ENCODE measurements at regions of chr3 and their contacts with region 1.

Region 1: GRCh38 chr3:124688581-124689454 is 41.4 kb upstream of the UMPS start:
- DNase-seq: peak; percentile 83
- H3K4me3 ChIP-seq: no peak overlapping the region
- H3K27ac ChIP-seq: no peak overlapping the region
- H3K4me1 ChIP-seq: peaks cover 0 to 2% (median 0%) of the 10 kb centered on the region in 4 donors
- H3K27me3 ChIP-seq: no peaks in the 10 kb centered on the region
- CTCF ChIP-seq: peak; percentile 80 to 85 (median 83)
- EP300 ChIP-seq: no peak
- POLR2A ChIP-seq: no peak

Region 2: DNA sequence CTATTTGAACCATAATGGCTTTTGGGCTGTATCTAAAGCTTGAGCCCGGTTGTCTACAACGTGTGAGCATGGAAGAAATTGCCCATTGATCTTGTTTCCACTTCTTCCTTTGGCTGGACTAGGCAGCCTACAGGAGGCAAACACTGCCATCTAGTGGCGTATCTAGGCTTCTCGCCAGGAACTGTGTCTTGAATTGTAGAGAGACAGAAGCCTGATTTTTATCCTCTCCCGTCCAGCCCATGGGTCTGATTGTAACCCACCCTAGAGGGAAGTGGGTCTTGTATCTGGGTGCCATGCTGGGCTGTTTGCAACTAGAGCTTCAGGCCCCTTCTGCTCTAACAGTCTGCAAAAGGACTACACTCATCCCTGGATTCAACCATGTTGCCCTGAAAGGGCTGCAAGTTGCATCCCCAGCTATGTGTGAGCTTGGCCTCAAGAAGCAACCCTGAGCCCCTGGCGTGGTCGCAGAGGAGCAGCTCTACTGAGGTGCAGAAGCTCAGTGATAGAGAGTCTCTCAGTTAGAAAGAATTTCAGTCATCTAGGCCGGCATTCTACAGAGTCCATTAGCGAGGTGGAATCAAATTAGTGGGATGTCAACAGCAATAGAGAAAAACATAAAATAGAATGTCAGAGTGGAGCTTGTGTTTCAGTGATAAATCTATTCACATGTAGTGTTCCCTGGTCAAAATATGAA is 128.8 kb before region 1 on chr3:
- in situ Hi-C with region 1: loop called in 1 of 4 experiments (anchors 5 kb)
- intact Hi-C with region 1: loop called (anchors 2 kb)
- DNase-seq: peak; percentile 75
- H3K4me3 ChIP-seq: no peak overlapping the region
- H3K27ac ChIP-seq: peak overlapping the region; percentile 39 to 49 (median 42)
- H3K4me1 ChIP-seq: peaks cover 4 to 32% (median 18%) of the 10 kb centered on the region in 4 donors
- H3K27me3 ChIP-seq: no peaks in the 10 kb centered on the region
- CTCF ChIP-seq: peak; percentile 76 to 91 (median 81)
- EP300 ChIP-seq: no peak
- POLR2A ChIP-seq: no peak

Region 3: DNA sequence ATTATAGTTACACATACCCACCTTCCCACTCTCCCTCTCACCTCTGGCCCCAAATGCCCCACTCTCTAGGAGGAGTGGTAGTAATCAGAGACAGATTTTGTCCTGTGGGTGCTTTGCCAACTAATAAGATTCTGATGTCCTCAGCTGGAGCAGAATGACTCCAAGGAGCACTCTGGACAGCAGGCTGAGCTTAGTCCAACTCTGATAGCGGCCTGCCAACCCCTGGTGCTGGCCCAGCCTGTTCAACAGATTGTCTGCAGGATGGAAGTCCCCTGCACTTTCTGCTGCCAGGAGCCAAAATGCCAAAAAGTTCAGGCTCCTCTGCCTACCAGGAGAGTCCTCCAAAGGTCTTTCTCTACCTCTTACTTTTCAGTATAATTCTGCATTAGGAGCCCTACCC is 119.1 kb before region 1 on chr3:
- in situ Hi-C with region 1: loop called (anchors 5 to 10 kb)
- intact Hi-C with region 1: loop called (anchors 2 kb)
- DNase-seq: no peak
- H3K4me3 ChIP-seq: no peak overlapping the region
- H3K27ac ChIP-seq: no peak overlapping the region
- H3K4me1 ChIP-seq: no peaks in the 10 kb centered on the region
- H3K27me3 ChIP-seq: no peaks in the 10 kb centered on the region
- CTCF ChIP-seq: no peak
- EP300 ChIP-seq: no peak
- POLR2A ChIP-seq: no peak

Region 4: DNA sequence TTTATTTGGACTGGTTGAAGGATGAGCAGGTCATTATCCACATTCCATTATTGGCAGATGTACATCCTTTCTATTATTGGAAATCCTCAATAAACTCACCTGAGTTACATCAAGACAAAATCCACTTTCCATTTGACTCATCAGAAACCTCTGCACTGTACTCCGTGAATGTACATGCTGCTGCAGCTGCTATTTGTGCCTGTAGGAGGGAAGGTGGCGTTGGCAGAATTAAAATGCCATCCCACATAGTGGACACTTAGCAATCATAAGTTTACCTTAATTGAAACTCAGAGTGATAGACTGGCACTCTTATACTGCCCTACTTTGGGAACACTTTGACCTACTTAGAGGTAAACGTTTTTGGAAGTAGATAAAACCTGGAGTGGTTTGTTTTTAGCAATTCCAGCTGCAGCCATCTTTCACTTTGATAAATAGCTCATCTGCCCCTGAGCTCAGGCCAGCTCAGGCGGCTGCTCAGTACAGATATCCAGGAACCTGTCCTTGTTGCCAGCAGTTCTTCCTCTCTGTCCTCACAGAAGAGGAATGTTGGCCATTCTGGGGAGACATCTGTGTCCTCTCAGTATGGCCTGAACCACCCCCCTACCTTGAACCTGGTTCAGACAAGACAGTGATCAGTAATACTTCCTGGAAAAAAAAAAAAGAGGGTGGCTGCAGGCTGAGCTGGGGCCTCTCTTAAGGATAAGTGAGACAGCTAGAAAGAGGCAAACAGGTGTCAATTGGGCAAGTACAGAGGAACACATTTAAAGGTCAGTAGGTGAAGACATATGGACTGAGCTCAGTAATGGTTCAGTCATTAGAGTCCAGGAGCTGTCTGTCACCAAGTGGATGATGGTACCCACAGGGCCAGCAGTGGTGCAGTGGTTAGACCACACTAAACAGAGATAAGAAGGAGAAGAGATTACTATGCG is 112.0 kb before region 1 on chr3:
- in situ Hi-C with region 1: loop called in 3 of 4 experiments (anchors 5 to 10 kb)
- intact Hi-C with region 1: no loop called
- DNase-seq: no peak
- H3K4me3 ChIP-seq: no peak overlapping the region
- H3K27ac ChIP-seq: no peak overlapping the region
- H3K4me1 ChIP-seq: no peaks in the 10 kb centered on the region
- H3K27me3 ChIP-seq: no peaks in the 10 kb centered on the region
- CTCF ChIP-seq: peak in 1 of 5 experiments; percentile 2
- EP300 ChIP-seq: no peak
- POLR2A ChIP-seq: no peak